Activated T-helper 2 cell treated with anti-CD3 and anti-CD28 coated beads, Interferon-gamma antibody, Interleukin-2, Interleukin-4, amounts not matched to agents 10 μg/mL and 5 μg/mL and 100 μg/mL, durations not matched to agents 14 hours and 24 hours and 36 hours (primary cell): ENCODE measurements at regions of chr1 and their contacts with region 1.

Region 1: DNA sequence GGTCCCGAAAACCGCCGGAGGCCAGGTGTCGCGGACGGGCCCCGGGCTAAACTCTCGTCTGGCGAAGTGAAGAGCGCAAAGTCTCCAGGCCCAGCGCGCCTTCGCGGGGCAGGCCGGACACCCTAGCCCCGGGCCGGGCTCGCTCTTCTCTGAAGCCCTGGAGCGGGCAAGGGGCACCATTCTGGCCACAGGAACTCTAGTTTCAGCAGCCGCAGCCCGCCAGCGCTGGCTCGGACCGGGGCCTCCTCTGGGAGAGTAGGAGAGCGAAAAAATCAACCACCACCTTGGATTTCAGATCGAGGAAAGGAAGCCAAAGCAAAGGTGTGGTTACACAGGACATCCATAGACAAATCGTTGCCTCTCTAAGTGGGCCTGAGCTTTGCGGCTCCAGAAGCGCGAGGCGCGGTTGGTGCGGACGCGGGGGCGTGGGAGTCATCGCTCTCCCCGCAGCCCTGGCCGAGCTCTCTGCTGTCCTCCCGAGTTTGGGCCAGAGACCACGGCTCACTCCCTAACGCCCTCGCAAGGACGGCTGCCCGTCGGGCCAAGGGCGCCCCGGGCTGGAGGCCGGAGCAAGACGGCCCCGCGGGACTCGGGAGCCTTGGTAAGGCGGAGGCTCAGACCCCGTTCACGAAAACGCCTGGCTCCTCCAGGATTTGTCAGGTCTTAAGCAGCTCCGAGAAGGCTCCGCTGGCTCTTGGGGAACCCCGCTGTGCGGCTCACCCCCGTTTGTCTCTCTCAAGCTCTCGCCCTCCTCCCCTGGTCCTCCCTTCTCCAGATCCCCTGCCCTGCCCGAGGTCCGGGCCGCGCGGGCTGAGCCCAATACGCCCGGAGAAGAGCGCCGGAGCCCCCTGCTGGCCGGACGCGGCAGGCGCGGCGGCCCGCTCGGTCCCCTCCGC is 132.9 kb upstream of the DPYD start:
- DNase-seq: peak; percentile 47
- H3K4me3 Mint-ChIP-seq: peak overlapping the region; percentile 58
- H3K27ac Mint-ChIP-seq: no peak overlapping the region
- H3K4me1 Mint-ChIP-seq: peaks cover 27% of the 10 kb centered on the region
- H3K27me3 Mint-ChIP-seq: peaks cover 86% of the 10 kb centered on the region

Region 2: DNA sequence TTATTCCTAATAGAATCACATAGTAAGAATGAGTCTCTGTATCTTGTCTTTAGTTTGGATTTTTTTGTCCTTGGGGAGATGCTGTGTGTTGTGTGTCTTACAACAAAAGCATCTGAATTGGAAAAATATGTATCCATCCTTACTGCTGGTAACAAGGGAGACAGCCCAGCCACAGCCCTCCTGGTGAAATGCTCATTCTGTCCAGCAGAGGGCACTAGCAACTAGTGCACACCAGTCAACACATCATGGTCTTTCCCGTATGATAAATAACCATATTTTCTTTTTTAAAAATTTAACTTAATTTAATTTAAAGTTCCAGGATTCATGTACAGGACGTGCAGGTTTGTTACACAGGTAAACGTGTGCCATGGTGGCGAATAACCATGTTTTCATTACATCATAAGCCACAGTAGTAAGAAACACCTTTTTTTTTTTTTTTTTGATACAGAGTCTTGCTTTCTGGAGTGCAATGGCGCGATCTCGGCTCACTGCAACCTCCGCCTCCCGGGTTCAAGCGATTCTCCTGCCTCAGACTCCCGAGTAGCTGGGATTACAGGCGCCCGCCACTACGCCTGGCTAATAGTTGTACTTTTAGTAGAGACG is 1087.1 kb before region 1 on chr1:
- intact Hi-C with region 1: loop called (anchors 1 kb)
- DNase-seq: peak; percentile 52
- H3K4me3 Mint-ChIP-seq: no peak overlapping the region
- H3K27ac Mint-ChIP-seq: no peak overlapping the region
- H3K4me1 Mint-ChIP-seq: no peaks in the 10 kb centered on the region
- H3K27me3 Mint-ChIP-seq: peaks cover 4% of the 10 kb centered on the region

Region 3: GRCh38 chr1:97243973-97244560 is 809.7 kb before region 1 on chr1:
- intact Hi-C with region 1: loop called (anchors 5 kb)
- DNase-seq: no peak
- H3K4me3 Mint-ChIP-seq: no peak overlapping the region
- H3K27ac Mint-ChIP-seq: no peak overlapping the region
- H3K4me1 Mint-ChIP-seq: no peaks in the 10 kb centered on the region
- H3K27me3 Mint-ChIP-seq: no peaks in the 10 kb centered on the region

Region 4: DNA sequence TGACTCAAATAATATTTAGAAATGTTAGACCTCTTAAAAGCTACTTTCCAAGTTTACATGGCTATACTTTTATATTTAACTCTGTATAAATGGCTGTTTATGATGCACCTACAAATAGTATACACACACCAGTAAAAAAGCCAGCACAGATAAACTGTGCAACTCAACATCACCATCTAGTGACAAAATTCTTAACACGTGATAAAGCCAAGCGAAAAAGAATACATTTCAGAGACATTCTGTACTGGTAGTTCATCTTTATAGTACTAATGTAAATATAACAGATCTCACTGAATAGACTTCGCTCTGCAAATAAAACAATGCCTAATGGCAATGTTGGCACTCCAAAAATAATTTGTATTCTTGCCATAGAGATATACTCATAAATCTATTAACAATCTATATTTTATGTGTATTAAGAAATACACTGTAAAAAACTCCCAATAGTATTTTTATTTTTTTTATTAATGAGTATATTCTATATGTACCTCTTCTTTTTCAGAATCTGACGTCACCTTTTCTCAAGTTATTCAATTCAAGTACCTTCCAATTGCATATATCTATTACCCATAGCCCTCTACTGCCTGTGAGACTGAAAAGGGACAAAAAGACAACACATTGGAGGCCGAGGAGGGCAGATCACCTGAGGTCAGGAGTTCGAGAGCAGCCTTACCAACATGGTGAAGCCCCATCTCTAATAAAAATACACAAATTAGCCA is 233.1 kb before region 1 on chr1:
- intact Hi-C with region 1: loop called (anchors 5 kb)
- DNase-seq: no peak
- H3K4me3 Mint-ChIP-seq: no peak overlapping the region
- H3K27ac Mint-ChIP-seq: no peak overlapping the region
- H3K4me1 Mint-ChIP-seq: no peaks in the 10 kb centered on the region
- H3K27me3 Mint-ChIP-seq: no peaks in the 10 kb centered on the region

Region 5: DNA sequence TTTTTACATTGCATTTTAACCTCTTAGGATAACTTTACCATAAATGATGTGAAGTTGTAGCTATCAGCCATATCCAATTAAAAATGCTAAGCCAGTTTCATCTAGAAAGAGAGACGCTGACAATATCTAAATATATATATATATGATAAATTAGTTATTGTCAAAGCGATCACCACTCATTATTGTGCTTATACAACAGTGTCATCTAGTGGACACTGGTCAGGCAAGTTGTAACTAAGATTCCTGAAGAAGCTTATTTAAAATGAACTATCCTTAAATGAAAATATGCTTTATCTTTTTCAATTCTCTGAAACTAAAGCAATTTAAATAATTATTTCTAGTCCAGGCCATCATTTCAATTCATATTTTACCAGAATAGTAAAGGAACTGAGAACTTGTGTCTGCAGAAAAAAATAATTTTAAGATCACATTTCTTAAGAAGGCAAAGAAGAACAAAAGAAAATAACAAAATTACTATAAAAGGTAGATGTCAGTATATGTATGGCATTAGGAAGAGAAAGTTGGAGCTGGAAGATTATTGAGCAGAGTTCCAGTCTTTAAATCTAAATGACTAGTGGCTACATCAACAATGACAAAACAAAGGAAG is 414.5 kb after region 1 on chr1:
- intact Hi-C with region 1: loop called (anchors 1 kb)
- DNase-seq: no peak
- H3K4me3 Mint-ChIP-seq: no peak overlapping the region
- H3K27ac Mint-ChIP-seq: no peak overlapping the region
- H3K4me1 Mint-ChIP-seq: no peaks in the 10 kb centered on the region
- H3K27me3 Mint-ChIP-seq: peaks cover 10% of the 10 kb centered on the region